K562 (cell line): ENCODE measurements at regions of chr10 and their contacts with region 1.

Region 1: GRCh38 chr10:60444494-60445064 is 54.9 kb upstream of the ANK3 start:
- DNase-seq: peak in 1 of 4 experiments; percentile 30
- ATAC-seq: no peak
- H3K4me3 ChIP-seq: no peak overlapping the region
- H3K27ac ChIP-seq: no peak overlapping the region
- H3K4me1 ChIP-seq: no peaks in the 10 kb centered on the region
- H3K27me3 ChIP-seq: peaks cover 0 to 2% of the 10 kb centered on the region in 2 experiments; a peak in 1 of 5 replicates
- CTCF ChIP-seq: peak in 2 of 3 experiments; percentile 26 to 71; a peak in 3 of 6 replicates
- EP300 ChIP-seq: no peak
- POLR2A ChIP-seq: no peak
- RAD21 ChIP-seq: peak; percentile 77 to 84

Region 2: DNA sequence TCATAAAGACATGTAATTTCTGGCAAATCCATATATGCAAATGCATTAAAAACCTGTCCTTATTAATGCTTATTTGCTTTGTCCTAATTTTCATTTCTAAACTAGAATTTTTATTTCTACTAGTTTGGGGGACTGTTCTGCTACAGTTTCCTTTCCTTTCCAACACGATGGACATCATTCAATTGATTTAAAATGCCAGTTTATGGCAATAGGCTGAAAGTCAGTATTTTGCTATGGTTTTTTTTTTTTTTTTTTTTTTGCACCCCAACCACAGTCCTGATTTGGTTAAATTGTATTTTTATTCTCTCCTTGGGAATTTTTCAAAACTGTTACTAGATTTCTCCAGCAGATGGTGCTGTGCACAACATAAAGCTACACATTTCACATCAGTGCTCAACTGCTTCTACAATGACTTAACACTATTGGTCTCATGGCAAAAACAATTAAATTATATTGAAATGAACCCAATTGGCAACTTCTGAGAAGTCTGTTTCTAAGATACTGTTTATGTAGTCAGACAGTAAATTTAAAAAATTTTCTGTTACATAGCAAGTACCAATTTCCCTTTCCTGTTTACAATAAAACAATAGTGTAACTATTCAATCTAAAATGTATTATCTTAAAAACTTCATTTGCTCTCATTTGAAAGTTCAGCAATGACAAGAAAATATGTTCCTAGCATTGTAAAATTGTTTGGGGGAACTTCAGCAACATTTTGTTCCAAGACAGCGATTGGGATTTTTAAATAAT is 344.4 kb before region 1 on chr10:
- CTCF ChIA-PET with region 1: interaction called, 20 read pairs
- POLR2A ChIA-PET with region 1: no interaction called
- in situ Hi-C with region 1: loop called (anchors 5 kb)
- intact Hi-C with region 1: no loop called
- DNase-seq: peak; percentile 53 to 77 (median 60)
- ATAC-seq: peak; percentile 83
- H3K4me3 ChIP-seq: no peak overlapping the region
- H3K27ac ChIP-seq: peak overlapping the region; percentile 54; the same call in 1 of the 3 replicates
- H3K4me1 ChIP-seq: peaks cover 0 to 7% of the 10 kb centered on the region in 2 experiments; a peak in 2 of 5 replicates
- H3K27me3 ChIP-seq: no peaks in the 10 kb centered on the region
- CTCF ChIP-seq: peak; percentile 55 to 89 (median 61); a peak in 4 of 6 replicates
- EP300 ChIP-seq: peak; percentile 50; the same call in 1 of the 2 replicates
- POLR2A ChIP-seq: no peak
- RAD21 ChIP-seq: peak; percentile 65 to 85

Region 3: GRCh38 chr10:60769406-60769805 is 324.8 kb after region 1 on chr10:
- CTCF ChIA-PET with region 1: no interaction called
- POLR2A ChIA-PET with region 1: no interaction called
- in situ Hi-C with region 1: no loop called
- intact Hi-C with region 1: loop called (anchors 1 kb)
- DNase-seq: no peak
- ATAC-seq: no peak; the same call in 2 of the 3 replicates
- H3K4me3 ChIP-seq: no peak overlapping the region
- H3K27ac ChIP-seq: no peak overlapping the region
- H3K4me1 ChIP-seq: no peaks in the 10 kb centered on the region
- H3K27me3 ChIP-seq: peaks cover 0 to 10% of the 10 kb centered on the region in 2 experiments; a peak in 2 of 5 replicates
- CTCF ChIP-seq: no peak
- EP300 ChIP-seq: no peak
- POLR2A ChIP-seq: no peak
- RAD21 ChIP-seq: no peak